ENCODE measurements at regions of chr12 and their contacts with region 1.

Region 1: GRCh38 chr12:53321074-53321814 is at the start of gene AAAS:
- DNase-seq: peak; percentile 71
- H3K4me3 ChIP-seq: peak within 1 kb of the TSS; percentile 88
- H3K27me3 ChIP-seq: no peaks in the 10 kb centered on the region
- CTCF ChIP-seq: peak; percentile 100
- polyA plus RNA-seq, gene AAAS: 53.3 and 84.3 TPM in 2 replicates

Region 2: GRCh38 chr12:53295070-53295890 is 26.0 kb before region 1 on chr12 and contains the start of gene PFDN5:
- CTCF ChIA-PET with region 1: interaction called, 39 read pairs
- POLR2A ChIA-PET with region 1: interaction called, 7 read pairs
- DNase-seq: peak; percentile 81
- H3K4me3 ChIP-seq: peak within 1 kb of the TSS; percentile 69
- H3K27me3 ChIP-seq: no peaks in the 10 kb centered on the region
- CTCF ChIP-seq: peak; percentile 17; the same call in 1 of the 2 replicates
- polyA plus RNA-seq, gene PFDN5: 965 and 1,130 TPM in 2 replicates

Region 3: GRCh38 chr12:53308276-53308675 is 13.0 kb before region 1 on chr12:
- CTCF ChIA-PET with region 1: interaction called, 29 read pairs
- POLR2A ChIA-PET with region 1: interaction called, 3 read pairs
- DNase-seq: no peak
- H3K4me3 ChIP-seq: no peak overlapping the region
- H3K27me3 ChIP-seq: no peaks in the 10 kb centered on the region
- CTCF ChIP-seq: no peak

Region 4: GRCh38 chr12:53427905-53428594 is 106.8 kb after region 1 on chr12:
- CTCF ChIA-PET with region 1: interaction called, 30 read pairs
- POLR2A ChIA-PET with region 1: no interaction called
- DNase-seq: peak; percentile 76
- H3K4me3 ChIP-seq: no peak overlapping the region
- H3K27me3 ChIP-seq: no peaks in the 10 kb centered on the region
- CTCF ChIP-seq: no peak

Measured in BJ (cell line).